Activated CD8-positive, alpha-beta T cell treated with anti-CD3 and anti-CD28 coated beads for 36 hours (primary cell): ENCODE measurements at regions of chr9 and their contacts with region 1.

Region 1: DNA sequence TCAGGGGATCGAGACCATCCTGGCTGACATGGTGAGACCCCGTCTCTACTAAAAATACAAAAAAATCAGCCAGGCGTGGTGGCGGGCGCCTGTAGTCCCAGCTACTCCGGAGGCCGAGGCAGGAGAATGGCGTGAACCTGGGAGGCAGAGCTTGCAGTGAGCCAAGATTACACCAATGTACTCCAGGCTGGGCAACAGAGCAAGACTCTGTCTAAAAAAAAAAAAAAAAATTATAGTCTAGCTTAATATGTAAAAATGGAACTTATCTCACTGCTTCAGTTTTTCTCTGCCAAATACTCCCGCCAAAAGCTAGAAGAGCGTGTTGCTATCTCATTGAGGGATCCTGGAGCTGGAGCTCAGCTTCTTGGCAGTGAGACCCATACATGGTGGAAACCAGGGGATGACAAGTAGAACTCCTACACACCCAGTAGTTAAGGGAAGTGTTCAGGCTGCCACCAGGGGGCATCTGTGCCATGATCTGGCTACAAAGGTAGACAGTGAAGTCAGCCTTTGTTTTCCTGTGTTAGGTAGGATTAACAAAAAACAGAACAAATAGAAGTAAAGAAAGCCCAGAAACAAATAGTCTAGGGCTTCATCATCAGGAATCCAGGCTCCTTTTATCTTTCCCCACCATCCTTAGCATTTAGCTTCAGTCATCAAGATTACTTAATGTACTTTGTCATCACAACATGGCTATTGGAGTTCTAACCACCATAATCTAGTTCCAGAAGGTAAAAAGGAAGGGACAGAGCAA is 33.6 kb upstream of the GLIPR2 start:
- DNase-seq: peak; percentile 92
- ATAC-seq: peak; percentile 99
- H3K4me3 Mint-ChIP-seq: no peak overlapping the region
- H3K27ac Mint-ChIP-seq: no peak overlapping the region
- H3K4me1 Mint-ChIP-seq: peaks cover 8% of the 10 kb centered on the region
- H3K27me3 Mint-ChIP-seq: no peaks in the 10 kb centered on the region
- CTCF ChIP-seq: peak; percentile 92

Region 2: DNA sequence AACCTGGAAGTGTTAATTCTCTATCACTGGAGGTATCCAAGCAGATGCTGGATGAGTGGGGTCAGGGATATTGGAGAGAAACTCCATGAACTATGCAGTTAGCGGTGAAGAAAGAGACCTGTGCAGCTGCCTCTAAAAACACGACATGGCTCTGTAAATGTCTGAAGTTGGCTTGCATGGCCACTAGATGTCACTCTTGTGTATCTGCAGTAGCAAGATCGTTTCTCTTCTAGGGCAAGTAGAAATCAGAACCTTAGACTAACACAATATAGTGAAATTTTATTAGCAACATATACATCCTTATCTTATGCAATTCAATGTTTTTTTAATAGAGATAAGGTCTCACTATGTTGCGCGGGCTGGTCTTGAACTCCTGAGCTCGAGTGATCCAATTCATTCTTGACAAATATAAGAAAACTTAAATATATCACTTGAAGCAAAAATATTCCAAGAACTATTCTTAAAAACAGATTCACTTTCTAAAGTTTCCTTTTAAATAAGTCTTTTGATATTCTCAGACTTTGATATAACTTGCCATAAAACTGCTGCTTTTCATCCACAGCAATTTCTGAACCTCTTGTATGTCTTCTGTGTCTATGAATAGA is 147.9 kb before region 1 on chr9:
- CTCF ChIA-PET with region 1: interaction called, 18 read pairs
- POLR2A ChIA-PET with region 1: no interaction called
- intact Hi-C with region 1: no loop called
- DNase-seq: peak; percentile 67
- ATAC-seq: peak; percentile 80
- H3K4me3 Mint-ChIP-seq: no peak overlapping the region
- H3K27ac Mint-ChIP-seq: no peak overlapping the region
- H3K4me1 Mint-ChIP-seq: no peaks in the 10 kb centered on the region
- H3K27me3 Mint-ChIP-seq: peaks cover 4% of the 10 kb centered on the region
- CTCF ChIP-seq: peak; percentile 79

Region 3: GRCh38 chr9:35993976-35994720 is 108.8 kb before region 1 on chr9:
- CTCF ChIA-PET with region 1: no interaction called
- POLR2A ChIA-PET with region 1: no interaction called
- intact Hi-C with region 1: no loop called
- DNase-seq: no peak
- ATAC-seq: no peak
- H3K4me3 Mint-ChIP-seq: no peak overlapping the region
- H3K27ac Mint-ChIP-seq: no peak overlapping the region
- H3K4me1 Mint-ChIP-seq: no peaks in the 10 kb centered on the region
- H3K27me3 Mint-ChIP-seq: peaks cover 11% of the 10 kb centered on the region
- CTCF ChIP-seq: no peak

Region 4: DNA sequence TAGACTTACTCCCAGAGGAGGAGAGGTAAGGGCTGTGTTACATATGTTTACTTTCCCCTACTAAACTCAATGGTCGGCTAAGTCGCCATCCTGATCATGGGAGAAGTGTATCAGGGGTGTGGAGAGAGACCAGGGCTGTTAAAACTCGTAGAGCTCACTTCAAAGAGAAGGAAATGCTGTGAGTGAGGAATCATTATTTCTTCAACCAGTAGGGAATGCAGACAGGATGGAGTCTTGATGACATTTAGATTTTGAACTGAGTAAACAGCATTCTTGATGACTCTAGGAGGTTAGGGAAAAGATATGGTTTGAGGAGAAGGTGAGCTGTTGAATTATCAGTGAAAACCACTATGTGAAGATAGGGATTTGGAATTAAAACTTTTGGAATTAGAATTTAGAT is 48.9 kb before region 1 on chr9:
- CTCF ChIA-PET with region 1: interaction called, 10 read pairs
- POLR2A ChIA-PET with region 1: no interaction called
- intact Hi-C with region 1: no loop called
- DNase-seq: no peak
- ATAC-seq: no peak
- H3K4me3 Mint-ChIP-seq: no peak overlapping the region
- H3K27ac Mint-ChIP-seq: no peak overlapping the region
- H3K4me1 Mint-ChIP-seq: no peaks in the 10 kb centered on the region
- H3K27me3 Mint-ChIP-seq: no peaks in the 10 kb centered on the region
- CTCF ChIP-seq: no peak

Region 5: GRCh38 chr9:36127652-36128244 is 24.8 kb after region 1 on chr9:
- CTCF ChIA-PET with region 1: interaction called, 20 read pairs
- POLR2A ChIA-PET with region 1: interaction called, 4 read pairs
- intact Hi-C with region 1: no loop called
- DNase-seq: no peak
- ATAC-seq: peak; percentile 39
- H3K4me3 Mint-ChIP-seq: no peak overlapping the region
- H3K27ac Mint-ChIP-seq: no peak overlapping the region
- H3K4me1 Mint-ChIP-seq: peaks cover 17% of the 10 kb centered on the region
- H3K27me3 Mint-ChIP-seq: no peaks in the 10 kb centered on the region
- CTCF ChIP-seq: no peak

Region 6: DNA sequence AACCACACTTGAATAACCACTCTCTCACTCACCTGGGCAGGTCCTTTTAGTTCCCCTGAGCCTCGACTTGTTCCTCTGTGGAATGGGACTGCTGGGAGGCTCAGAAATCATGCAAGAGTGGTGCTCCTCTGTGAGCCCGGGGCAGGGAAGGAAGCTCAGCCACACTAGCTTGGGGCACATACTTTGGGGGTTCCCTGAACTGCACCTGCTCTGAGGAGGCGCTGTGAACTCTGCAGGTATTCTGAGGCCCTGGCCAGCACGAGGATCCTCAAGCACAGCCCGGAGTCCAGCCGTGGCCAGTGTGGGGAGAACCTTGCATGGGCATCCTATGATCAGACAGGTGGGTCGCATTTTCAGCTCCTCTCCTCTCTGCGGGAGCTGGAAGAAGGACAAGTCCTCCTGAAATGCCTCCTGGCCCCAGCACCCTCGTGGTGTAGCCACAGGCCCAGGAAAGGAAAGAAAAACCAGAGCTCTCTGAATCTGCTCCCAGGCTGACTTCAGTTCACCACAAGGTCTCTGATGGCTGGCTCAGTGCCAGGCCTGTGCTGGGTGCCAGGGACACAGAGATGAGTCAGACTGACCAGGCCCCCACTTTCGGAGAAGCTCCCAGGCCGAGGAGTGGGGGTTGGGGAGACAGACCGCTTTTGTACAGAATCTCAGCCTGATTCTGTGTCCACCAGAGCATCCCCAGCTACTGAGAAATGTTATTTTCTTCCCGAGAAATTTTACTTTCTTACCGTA is 45.6 kb after region 1 on chr9:
- CTCF ChIA-PET with region 1: interaction called, 20 read pairs
- POLR2A ChIA-PET with region 1: interaction called, 3 read pairs
- intact Hi-C with region 1: no loop called
- DNase-seq: peak; percentile 92
- ATAC-seq: peak; percentile 32
- H3K4me3 Mint-ChIP-seq: no peak overlapping the region
- H3K27ac Mint-ChIP-seq: peak overlapping the region; percentile 4
- H3K4me1 Mint-ChIP-seq: peaks cover 88% of the 10 kb centered on the region
- H3K27me3 Mint-ChIP-seq: no peaks in the 10 kb centered on the region
- CTCF ChIP-seq: no peak

Region 7: DNA sequence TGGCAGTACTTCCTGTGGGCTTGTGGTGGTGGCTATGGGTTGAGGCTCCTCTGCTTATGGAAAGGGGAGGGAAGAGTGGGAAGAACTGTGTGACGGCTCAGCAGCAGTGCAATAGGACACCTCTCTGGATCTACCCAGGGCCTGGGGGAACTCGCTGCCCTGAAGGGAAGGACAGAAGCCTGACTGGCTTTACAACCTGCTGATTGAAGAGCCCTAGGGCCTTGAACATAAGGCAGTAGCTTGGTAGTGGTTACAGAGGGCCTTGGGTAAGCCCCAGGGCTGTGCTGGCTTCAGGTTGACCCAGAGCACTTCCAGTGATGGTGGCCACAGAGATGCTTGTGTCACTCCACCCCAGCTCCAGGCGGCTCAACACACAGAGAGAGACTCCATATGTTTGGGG is 71.8 kb after region 1 on chr9:
- CTCF ChIA-PET with region 1: interaction called, 330 read pairs
- POLR2A ChIA-PET with region 1: interaction called, 4 read pairs
- intact Hi-C with region 1: no loop called
- DNase-seq: no peak
- ATAC-seq: no peak
- H3K4me3 Mint-ChIP-seq: no peak overlapping the region
- H3K27ac Mint-ChIP-seq: no peak overlapping the region
- H3K4me1 Mint-ChIP-seq: peaks cover 1% of the 10 kb centered on the region
- H3K27me3 Mint-ChIP-seq: no peaks in the 10 kb centered on the region
- CTCF ChIP-seq: no peak

Region 8: GRCh38 chr9:36470643-36471290 is 367.8 kb after region 1 on chr9:
- CTCF ChIA-PET with region 1: no interaction called
- POLR2A ChIA-PET with region 1: no interaction called
- intact Hi-C with region 1: no loop called
- DNase-seq: peak; percentile 84
- ATAC-seq: peak; percentile 99
- H3K4me3 Mint-ChIP-seq: peak overlapping the region; percentile 71
- H3K27ac Mint-ChIP-seq: peak overlapping the region; percentile 91
- H3K4me1 Mint-ChIP-seq: peaks cover 39% of the 10 kb centered on the region
- H3K27me3 Mint-ChIP-seq: no peaks in the 10 kb centered on the region
- CTCF ChIP-seq: no peak